Thyroid gland (tissue), 4 donors: ENCODE measurements at regions of chr19 and their contacts with region 1.

Region 1: GRCh38 chr19:40139533-40140287 is 49.0 kb upstream of the ZNF780A start:
- DNase-seq: peak in 1 of 2 donors; percentile 6
- H3K4me3 ChIP-seq: no peak overlapping the region
- H3K27ac ChIP-seq: no peak overlapping the region
- H3K4me1 ChIP-seq: peaks cover 6% of the 10 kb centered on the region in 2 donors
- H3K27me3 ChIP-seq: no peaks in the 10 kb centered on the region
- CTCF ChIP-seq: peak; percentile 48 to 90 (median 76)
- POLR2A ChIP-seq: no peak

Region 2: DNA sequence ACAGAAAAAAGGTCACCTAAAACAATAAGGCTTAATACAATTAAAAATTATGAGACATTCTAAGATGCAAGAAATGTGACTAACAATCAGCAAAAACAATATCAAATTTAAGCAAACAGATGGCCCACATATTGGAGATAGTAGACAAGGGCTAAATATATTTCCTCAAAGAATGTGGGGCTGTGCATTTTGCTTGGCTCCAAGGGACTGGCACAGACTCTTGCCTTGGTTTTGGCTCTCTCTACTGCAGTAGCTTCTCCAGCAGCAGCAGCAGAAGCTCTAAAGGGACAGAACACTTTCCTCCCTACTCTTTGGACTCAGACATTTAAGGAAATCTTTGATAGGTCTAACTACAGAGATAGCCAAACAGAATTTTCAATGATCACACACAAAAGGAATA is 10.7 kb before region 1 on chr19:
- intact Hi-C with region 1: no loop called
- DNase-seq: no peak
- H3K4me3 ChIP-seq: no peak overlapping the region
- H3K27ac ChIP-seq: no peak overlapping the region
- H3K4me1 ChIP-seq: no peaks in the 10 kb centered on the region
- H3K27me3 ChIP-seq: no peaks in the 10 kb centered on the region
- CTCF ChIP-seq: no peak
- POLR2A ChIP-seq: no peak

Region 3: GRCh38 chr19:40221858-40222837 is 82.4 kb after region 1 on chr19:
- intact Hi-C with region 1: loop called (anchors 5 kb)
- DNase-seq: peak; percentile 83 to 86
- H3K4me3 ChIP-seq: no peak overlapping the region
- H3K27ac ChIP-seq: no peak overlapping the region
- H3K4me1 ChIP-seq: peaks cover 7 to 26% of the 10 kb centered on the region in 2 donors
- H3K27me3 ChIP-seq: no peaks in the 10 kb centered on the region
- CTCF ChIP-seq: peak; percentile 88 to 96 (median 94)
- POLR2A ChIP-seq: no peak

Region 4: DNA sequence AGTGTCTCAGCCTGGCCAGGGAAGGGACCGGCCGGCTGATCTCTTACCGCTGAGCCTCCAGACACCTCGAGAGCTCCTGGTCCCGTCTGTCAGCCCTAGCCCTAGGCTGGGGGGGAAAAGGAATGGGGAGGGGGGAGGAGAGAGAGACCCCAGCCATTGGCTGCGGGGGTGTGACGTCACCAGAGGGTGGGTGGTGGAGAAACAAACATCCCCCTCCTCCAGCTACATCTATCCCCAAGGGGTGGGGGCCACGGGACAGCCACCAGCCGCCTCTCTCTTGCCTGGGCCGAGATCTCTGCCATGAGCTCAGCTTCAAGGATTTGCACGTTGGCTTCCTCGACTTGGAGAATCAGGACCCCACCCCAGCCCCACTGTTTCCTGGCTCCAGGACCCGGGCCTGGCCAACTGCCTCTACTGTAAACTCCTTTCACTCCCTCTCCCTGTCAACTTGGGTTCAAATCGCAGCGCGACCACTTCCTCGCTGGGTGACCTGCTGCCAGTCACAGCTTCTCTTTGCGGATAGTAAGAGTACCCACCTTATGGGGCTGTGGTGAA is 273.7 kb after region 1 on chr19 and contains the start of gene PRX:
- intact Hi-C with region 1: no loop called
- DNase-seq: no peak
- H3K4me3 ChIP-seq: no peak within 1 kb of the TSS
- H3K27ac ChIP-seq: peak within 1 kb of the TSS; percentile 2 to 81 (median 75)
- H3K4me1 ChIP-seq: peaks cover 33 to 38% of the 10 kb centered on the region in 2 donors
- H3K27me3 ChIP-seq: no peaks in the 10 kb centered on the region
- CTCF ChIP-seq: no peak
- POLR2A ChIP-seq: peak in 1 of 2 donors; percentile 24
- total RNA-seq, gene PRX: 7.3 to 27.5 (median 10.3) TPM

Region 5: DNA sequence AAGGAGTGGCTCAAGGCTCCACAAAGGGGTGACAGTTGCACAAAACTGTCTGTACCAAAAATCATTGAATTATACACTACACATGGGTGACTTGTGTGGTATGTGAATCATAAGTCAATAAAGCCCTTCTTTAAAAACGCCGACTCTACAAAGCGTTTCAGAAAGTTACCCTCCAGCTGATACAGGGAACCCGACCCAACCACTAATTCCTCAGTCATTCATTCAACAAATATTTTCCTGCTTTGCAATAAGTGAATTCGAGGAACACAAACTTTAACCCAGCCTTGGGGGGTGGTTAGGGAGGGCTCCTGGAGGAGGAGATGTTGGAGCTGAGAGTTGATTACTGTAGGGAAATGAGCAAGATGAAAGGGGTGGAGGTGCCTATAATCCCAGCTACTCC is 493.5 kb after region 1 on chr19:
- intact Hi-C with region 1: loop called (anchors 10 kb)
- DNase-seq: no peak
- H3K4me3 ChIP-seq: no peak overlapping the region
- H3K27ac ChIP-seq: no peak overlapping the region
- H3K4me1 ChIP-seq: peaks cover 0 to 6% of the 10 kb centered on the region in 2 donors
- H3K27me3 ChIP-seq: no peaks in the 10 kb centered on the region
- CTCF ChIP-seq: no peak
- POLR2A ChIP-seq: no peak